Naive thymus-derived CD4-positive, alpha-beta T cell (primary cell): ENCODE measurements at regions of chr14 and their contacts with region 1.

Region 1: DNA sequence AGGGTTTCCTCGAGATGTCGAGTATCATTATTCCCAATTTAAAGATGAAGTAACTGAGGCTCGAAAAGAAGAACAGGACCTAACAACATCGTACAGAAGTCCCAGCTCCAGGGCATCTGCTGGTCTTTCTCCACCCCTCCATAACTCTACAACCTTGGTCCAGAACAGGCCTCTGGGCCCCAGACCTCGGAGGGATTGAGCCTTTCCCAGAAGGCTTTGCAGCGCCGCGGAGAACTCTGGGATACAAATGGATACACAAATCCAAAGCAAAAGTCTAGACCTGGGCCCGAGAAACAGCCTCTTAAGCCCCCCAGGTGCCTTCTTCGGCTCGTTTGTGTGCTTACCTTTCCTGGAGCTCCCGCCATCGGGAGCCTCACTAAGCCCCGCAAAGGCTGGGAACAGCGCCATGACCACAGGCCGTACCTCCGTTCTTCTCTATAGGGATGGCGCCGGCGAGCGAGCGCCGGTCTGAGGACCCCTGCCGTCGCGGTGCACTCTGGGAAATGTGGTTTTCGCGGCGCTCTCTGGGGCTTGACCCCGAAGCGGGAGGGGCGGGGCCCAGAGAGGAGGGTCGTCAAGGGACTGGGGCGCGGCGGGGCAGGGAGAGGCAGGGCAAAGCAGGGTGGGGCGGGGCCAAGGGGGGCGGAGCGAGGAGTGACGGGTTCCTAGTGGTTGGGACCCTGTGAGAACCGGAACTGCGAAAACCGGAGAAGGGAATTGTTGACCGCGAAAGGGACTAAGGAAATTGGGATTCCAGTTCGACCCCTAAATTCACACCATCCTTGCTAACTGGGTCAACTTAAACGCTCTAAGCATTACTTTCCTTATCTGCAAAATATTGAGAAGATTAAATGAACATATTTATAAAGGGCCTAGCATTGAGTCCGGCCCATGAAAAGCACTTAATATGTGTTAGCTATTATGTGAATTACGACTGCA is at the start of gene NRDE2:
- DNase-seq: peak; percentile 74 to 95 (median 85)
- ATAC-seq: peak; percentile 99
- H3K4me3 ChIP-seq: peak within 1 kb of the TSS; percentile 91
- H3K4me3 Mint-ChIP-seq: peak within 1 kb of the TSS; percentile 90 to 95 (median 93)
- H3K27ac ChIP-seq: peak within 1 kb of the TSS; percentile 72
- H3K27ac Mint-ChIP-seq: peak within 1 kb of the TSS; percentile 86 to 97 (median 92)
- H3K4me1 ChIP-seq: peaks cover 0 to 9% of the 10 kb centered on the region in 2 donors
- H3K4me1 Mint-ChIP-seq: peaks cover 14 to 44% (median 38%) of the 10 kb centered on the region in 7 donors
- H3K27me3 ChIP-seq: no peaks in the 10 kb centered on the region
- H3K27me3 Mint-ChIP-seq: peaks cover 7 to 25% (median 9%) of the 10 kb centered on the region in 5 donors
- total RNA-seq, gene NRDE2: 23.6 to 30.2 (median 28.7) TPM

Region 2: DNA sequence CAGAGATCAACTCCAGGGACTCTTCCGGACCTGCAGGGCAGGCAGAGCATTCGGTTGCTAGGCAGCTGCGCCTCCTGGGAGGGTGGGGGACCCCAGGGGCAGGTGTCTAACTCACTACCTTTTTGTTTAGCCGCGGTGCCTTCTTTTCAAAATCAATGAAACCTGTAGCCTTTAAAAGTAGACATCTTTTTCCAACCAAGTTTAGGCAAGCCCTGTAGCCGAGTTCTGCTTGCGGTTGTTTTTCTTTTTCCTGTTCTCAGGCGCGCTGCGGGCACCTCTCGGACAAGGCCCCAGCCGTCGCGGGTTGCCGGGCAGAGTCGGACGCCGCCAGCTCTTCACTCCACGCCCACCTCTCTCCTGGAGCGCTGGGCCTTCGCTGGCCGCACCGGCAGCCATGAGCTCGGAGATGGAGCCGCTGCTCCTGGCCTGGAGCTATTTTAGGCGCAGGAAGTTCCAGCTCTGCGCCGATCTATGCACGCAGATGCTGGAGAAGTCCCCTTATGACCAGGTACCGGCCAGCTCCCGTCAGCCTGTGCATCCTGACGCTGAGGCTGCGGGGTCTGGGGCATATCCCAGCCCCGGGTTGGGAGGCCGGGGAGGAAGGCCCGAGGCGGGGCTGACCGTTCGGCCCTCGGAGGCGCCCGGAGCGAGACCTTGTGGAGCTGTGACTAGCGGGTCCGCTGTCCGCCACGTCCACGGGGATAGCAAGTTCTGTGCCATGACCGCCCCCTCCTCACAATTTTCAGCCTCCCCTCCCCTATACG is 1507.3 kb before region 1 on chr14 and contains the start of gene TTC8:
- CTCF ChIA-PET with region 1: no interaction called
- POLR2A ChIA-PET with region 1: interaction called, 3 read pairs
- intact Hi-C with region 1: loop called in 1 of 2 experiments (anchors 2 kb)
- DNase-seq: peak; percentile 75 to 92 (median 88)
- ATAC-seq: peak; percentile 98
- H3K4me3 ChIP-seq: peak within 1 kb of the TSS; percentile 74
- H3K4me3 Mint-ChIP-seq: peak within 1 kb of the TSS; percentile 72 to 98 (median 90)
- H3K27ac ChIP-seq: peak within 1 kb of the TSS; percentile 85
- H3K27ac Mint-ChIP-seq: peak within 1 kb of the TSS; percentile 97 to 99 (median 99)
- H3K4me1 ChIP-seq: peaks cover 5 to 6% of the 10 kb centered on the region in 2 donors
- H3K4me1 Mint-ChIP-seq: peaks cover 0 to 13% (median 11%) of the 10 kb centered on the region in 7 donors
- H3K27me3 ChIP-seq: no peaks in the 10 kb centered on the region
- H3K27me3 Mint-ChIP-seq: peaks cover 0 to 30% (median 8%) of the 10 kb centered on the region in 5 donors
- total RNA-seq, gene TTC8: 1.8 to 3.4 (median 2.1) TPM

Region 3: GRCh38 chr14:90256354-90257131 is 75.2 kb before region 1 on chr14 and contains the start of gene PSMC1:
- CTCF ChIA-PET with region 1: no interaction called
- POLR2A ChIA-PET with region 1: interaction called, 4 read pairs
- intact Hi-C with region 1: loop called (anchors 1 to 2 kb)
- DNase-seq: peak; percentile 51 to 89 (median 85)
- ATAC-seq: peak; percentile 97
- H3K4me3 ChIP-seq: peak within 1 kb of the TSS; percentile 87
- H3K4me3 Mint-ChIP-seq: peak within 1 kb of the TSS; percentile 86 to 99 (median 96)
- H3K27ac ChIP-seq: peak within 1 kb of the TSS; percentile 86
- H3K27ac Mint-ChIP-seq: peak within 1 kb of the TSS; percentile 90 to 98 (median 96)
- H3K4me1 ChIP-seq: peaks cover 13 to 17% of the 10 kb centered on the region in 2 donors
- H3K4me1 Mint-ChIP-seq: peaks cover 12 to 39% (median 34%) of the 10 kb centered on the region in 7 donors
- H3K27me3 ChIP-seq: no peaks in the 10 kb centered on the region
- H3K27me3 Mint-ChIP-seq: peaks cover 0 to 10% (median 7%) of the 10 kb centered on the region in 5 donors
- total RNA-seq, gene PSMC1: 47.9 to 101 (median 58.2) TPM

Region 4: DNA sequence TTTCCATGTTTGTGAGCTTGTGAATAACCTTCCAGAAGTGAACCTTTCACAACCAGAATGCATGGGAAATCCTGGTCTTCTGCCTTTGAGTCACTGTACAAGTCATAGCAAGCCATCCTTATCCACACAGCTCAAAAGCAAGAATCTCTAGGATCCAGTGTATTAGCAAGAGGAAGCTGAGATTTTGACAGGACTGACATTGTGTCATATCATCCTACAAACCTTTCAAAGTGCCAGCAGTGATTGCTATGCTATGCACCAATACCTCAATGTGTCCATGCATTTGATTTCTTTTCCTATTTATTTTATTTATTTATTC is 13.4 kb after region 1 on chr14:
- CTCF ChIA-PET with region 1: no interaction called
- POLR2A ChIA-PET with region 1: no interaction called
- intact Hi-C with region 1: no loop called
- DNase-seq: no peak
- ATAC-seq: no peak
- H3K4me3 ChIP-seq: no peak overlapping the region
- H3K4me3 Mint-ChIP-seq: no peak overlapping the region
- H3K27ac ChIP-seq: no peak overlapping the region
- H3K27ac Mint-ChIP-seq: no peak overlapping the region
- H3K4me1 ChIP-seq: no peaks in the 10 kb centered on the region
- H3K4me1 Mint-ChIP-seq: peaks cover 0 to 2% (median 0%) of the 10 kb centered on the region in 7 donors
- H3K27me3 ChIP-seq: no peaks in the 10 kb centered on the region
- H3K27me3 Mint-ChIP-seq: peaks cover 0 to 5% (median 0%) of the 10 kb centered on the region in 5 donors

Region 5: DNA sequence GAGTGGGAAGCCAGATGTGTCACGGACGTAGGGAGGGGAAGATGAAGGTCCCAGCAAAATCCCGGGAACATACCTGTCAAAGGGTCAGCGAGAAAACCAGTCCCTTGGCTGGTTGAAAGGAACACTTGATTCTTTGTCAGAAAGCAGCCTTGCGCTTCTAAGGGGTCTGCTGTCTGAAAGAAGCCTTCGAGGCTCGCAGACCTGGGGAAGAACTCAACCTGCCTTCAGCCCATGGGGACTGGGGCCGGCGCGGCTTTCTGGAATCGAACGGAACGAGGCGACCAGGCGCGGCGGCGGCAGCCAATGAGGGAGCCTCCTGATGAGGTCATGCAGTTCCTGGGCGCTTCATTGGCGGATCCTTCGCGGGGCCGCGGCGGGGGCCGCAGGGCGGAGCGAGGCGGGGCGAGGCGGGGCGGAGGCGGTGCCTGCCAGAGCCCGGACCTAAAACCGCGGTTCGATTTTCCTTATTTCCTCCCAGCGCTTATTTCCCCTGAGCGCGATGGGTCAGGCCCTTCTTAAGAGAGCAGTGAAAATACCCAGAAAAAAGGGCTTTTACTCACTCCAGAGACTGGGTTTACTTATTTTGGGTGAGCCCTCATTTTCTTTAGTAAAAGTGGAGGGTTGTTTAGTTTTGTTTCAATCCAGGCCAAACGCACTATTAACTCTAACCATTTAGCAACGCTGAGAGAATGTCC is 496.3 kb after region 1 on chr14:
- CTCF ChIA-PET with region 1: no interaction called
- POLR2A ChIA-PET with region 1: no interaction called
- intact Hi-C with region 1: loop called in 1 of 2 experiments (anchors 5 kb)
- DNase-seq: peak; percentile 83 to 94 (median 85)
- ATAC-seq: peak; percentile 100
- H3K4me3 ChIP-seq: peak overlapping the region; percentile 61
- H3K4me3 Mint-ChIP-seq: peak overlapping the region; percentile 69 to 91 (median 84)
- H3K27ac ChIP-seq: peak overlapping the region; percentile 69
- H3K27ac Mint-ChIP-seq: peak overlapping the region; percentile 79 to 96 (median 86)
- H3K4me1 ChIP-seq: peaks cover 14% of the 10 kb centered on the region in 2 donors
- H3K4me1 Mint-ChIP-seq: peaks cover 7 to 28% (median 18%) of the 10 kb centered on the region in 7 donors
- H3K27me3 ChIP-seq: no peaks in the 10 kb centered on the region
- H3K27me3 Mint-ChIP-seq: peaks cover 0 to 3% (median 0%) of the 10 kb centered on the region in 5 donors

Region 6: GRCh38 chr14:91466192-91466591 is 1134.4 kb after region 1 on chr14:
- CTCF ChIA-PET with region 1: no interaction called
- POLR2A ChIA-PET with region 1: no interaction called
- intact Hi-C with region 1: no loop called
- DNase-seq: no peak
- ATAC-seq: no peak
- H3K4me3 ChIP-seq: no peak overlapping the region
- H3K4me3 Mint-ChIP-seq: no peak overlapping the region
- H3K27ac ChIP-seq: peak overlapping the region; percentile 2
- H3K27ac Mint-ChIP-seq: peak overlapping the region in 5 of 9 donors; percentile 5 to 65 (median 60)
- H3K4me1 ChIP-seq: no peaks in the 10 kb centered on the region
- H3K4me1 Mint-ChIP-seq: peaks cover 4 to 23% (median 12%) of the 10 kb centered on the region in 7 donors
- H3K27me3 ChIP-seq: no peaks in the 10 kb centered on the region
- H3K27me3 Mint-ChIP-seq: no peaks in the 10 kb centered on the region

Region 7: GRCh38 chr14:92121670-92122350 is 1790.0 kb after region 1 on chr14 and contains the starts of genes CPSF2 and NDUFB1:
- CTCF ChIA-PET with region 1: no interaction called
- POLR2A ChIA-PET with region 1: no interaction called
- intact Hi-C with region 1: loop called in 1 of 2 experiments (anchors 5 kb)
- DNase-seq: peak; percentile 74 to 87 (median 85)
- ATAC-seq: peak; percentile 92
- H3K4me3 ChIP-seq: peak within 1 kb of the TSS; percentile 78
- H3K4me3 Mint-ChIP-seq: peak within 1 kb of the TSS; percentile 88 to 100 (median 99)
- H3K27ac ChIP-seq: peak within 1 kb of the TSS; percentile 92
- H3K27ac Mint-ChIP-seq: peak within 1 kb of the TSS; percentile 96 to 100 (median 100)
- H3K4me1 ChIP-seq: peaks cover 17 to 19% of the 10 kb centered on the region in 2 donors
- H3K4me1 Mint-ChIP-seq: peaks cover 27 to 72% (median 53%) of the 10 kb centered on the region in 7 donors
- H3K27me3 ChIP-seq: no peaks in the 10 kb centered on the region
- H3K27me3 Mint-ChIP-seq: no peaks in the 10 kb centered on the region
- total RNA-seq, gene CPSF2: 30.2 to 77.4 (median 60.4) TPM
- total RNA-seq, gene NDUFB1: 55.1 to 107 (median 89.7) TPM